Activated naive CD4-positive, alpha-beta T cell treated with anti-CD3 and anti-CD28 coated beads for 36 hours (primary cell): ENCODE measurements at regions of chr12 and their contacts with region 1.

Region 1: GRCh38 chr12:64759035-64759901 is at the start of gene GNS:
- DNase-seq: peak; percentile 98
- H3K4me3 Mint-ChIP-seq: peak within 1 kb of the TSS; percentile 83
- H3K27ac Mint-ChIP-seq: peak within 1 kb of the TSS; percentile 85
- H3K4me1 Mint-ChIP-seq: peaks cover 41% of the 10 kb centered on the region
- H3K27me3 Mint-ChIP-seq: no peaks in the 10 kb centered on the region
- total RNA-seq, gene GNS: 14.3 to 14.6 TPM

Region 2: GRCh38 chr12:64451687-64452558 is 307.3 kb before region 1 on chr12 and contains the start of gene TBK1:
- CTCF ChIA-PET with region 1: no interaction called
- intact Hi-C with region 1: loop called (anchors 2 kb)
- DNase-seq: peak; percentile 45
- H3K4me3 Mint-ChIP-seq: peak within 1 kb of the TSS; percentile 94
- H3K27ac Mint-ChIP-seq: peak within 1 kb of the TSS; percentile 94
- H3K4me1 Mint-ChIP-seq: peaks cover 41% of the 10 kb centered on the region
- H3K27me3 Mint-ChIP-seq: no peaks in the 10 kb centered on the region
- total RNA-seq, gene TBK1: 10.7 to 12.1 TPM

Region 3: DNA sequence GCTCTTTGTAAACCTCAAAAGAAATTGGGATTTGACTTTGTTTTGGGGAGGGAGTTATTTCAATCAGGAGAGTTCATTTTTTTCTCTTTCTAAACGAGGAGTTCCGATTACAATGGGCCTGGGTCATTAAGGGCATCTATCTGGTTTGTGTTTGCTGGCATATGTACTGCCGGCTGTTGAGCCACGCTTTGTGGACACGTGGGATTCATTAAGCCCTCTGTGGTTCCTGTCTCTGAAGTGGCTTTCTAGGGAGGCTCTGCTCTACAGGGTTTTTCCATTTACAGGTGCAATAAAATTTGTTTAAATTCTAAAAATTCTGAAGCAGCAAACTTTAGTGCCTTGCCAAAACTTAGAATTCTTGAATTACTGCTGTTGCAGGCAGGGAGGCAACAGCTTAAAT is 58.0 kb before region 1 on chr12:
- CTCF ChIA-PET with region 1: no interaction called
- intact Hi-C with region 1: loop called (anchors 1 kb)
- DNase-seq: no peak
- H3K4me3 Mint-ChIP-seq: peak overlapping the region; percentile 1
- H3K27ac Mint-ChIP-seq: peak overlapping the region; percentile 65
- H3K4me1 Mint-ChIP-seq: peaks cover 36% of the 10 kb centered on the region
- H3K27me3 Mint-ChIP-seq: no peaks in the 10 kb centered on the region

Region 4: GRCh38 chr12:64742416-64742815 is 16.9 kb before region 1 on chr12:
- CTCF ChIA-PET with region 1: no interaction called
- intact Hi-C with region 1: loop called (anchors 1 kb)
- DNase-seq: no peak
- H3K4me3 Mint-ChIP-seq: no peak overlapping the region
- H3K27ac Mint-ChIP-seq: no peak overlapping the region
- H3K4me1 Mint-ChIP-seq: peaks cover 21% of the 10 kb centered on the region
- H3K27me3 Mint-ChIP-seq: no peaks in the 10 kb centered on the region

Region 5: DNA sequence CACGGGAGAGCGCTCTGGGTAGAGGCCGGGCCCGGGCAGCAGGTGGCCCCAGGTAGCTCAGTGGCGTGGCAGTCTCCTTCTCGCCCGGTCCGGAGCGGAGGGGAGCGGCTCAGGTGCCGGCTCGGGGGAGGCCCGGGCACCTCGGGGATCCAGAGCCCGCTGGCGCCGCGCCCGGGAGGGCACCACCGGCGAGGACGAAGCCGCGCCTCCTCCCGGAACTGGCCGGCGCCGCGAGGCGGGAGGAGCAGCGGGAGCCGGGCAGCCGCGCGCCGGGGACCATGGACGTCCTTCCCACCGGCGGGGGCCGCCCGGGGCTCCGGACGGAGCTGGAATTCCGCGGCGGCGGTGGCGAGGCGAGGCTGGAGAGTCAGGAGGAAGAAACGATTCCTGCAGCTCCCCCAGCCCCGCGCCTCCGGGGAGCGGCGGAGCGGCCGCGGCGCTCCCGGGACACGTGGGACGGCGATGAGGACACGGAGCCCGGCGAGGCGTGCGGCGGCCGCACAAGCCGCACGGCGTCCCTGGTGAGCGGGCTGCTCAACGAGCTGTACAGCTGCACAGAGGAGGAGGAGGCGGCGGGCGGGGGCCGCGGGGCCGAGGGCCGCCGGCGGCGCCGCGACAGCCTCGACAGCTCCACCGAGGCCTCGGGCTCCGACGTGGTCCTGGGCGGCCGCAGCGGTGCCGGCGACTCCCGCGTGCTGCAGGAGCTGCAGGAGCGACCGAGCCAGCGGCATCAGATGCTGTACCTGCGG is 21.4 kb after region 1 on chr12:
- CTCF ChIA-PET with region 1: no interaction called
- intact Hi-C with region 1: loop called (anchors 2 kb)
- DNase-seq: peak; percentile 21
- H3K4me3 Mint-ChIP-seq: peak overlapping the region; percentile 74
- H3K27ac Mint-ChIP-seq: no peak overlapping the region
- H3K4me1 Mint-ChIP-seq: peaks cover 12% of the 10 kb centered on the region
- H3K27me3 Mint-ChIP-seq: peaks cover 65% of the 10 kb centered on the region